ENCODE measurements at regions of chr13 and their contacts with region 1.

Region 1: GRCh38 chr13:109786457-109787134 is at the start of gene IRS2:
- DNase-seq: peak; percentile 91 to 95 (median 93)
- ATAC-seq: peak; percentile 78 to 93 (median 87)
- H3K4me3 ChIP-seq: peak within 1 kb of the TSS; percentile 64 to 95 (median 80)
- H3K27ac ChIP-seq: peak within 1 kb of the TSS; percentile 74 to 97 (median 91)
- H3K4me1 ChIP-seq: peaks cover 0 to 51% (median 23%) of the 10 kb centered on the region in 12 donors
- H3K27me3 ChIP-seq: peaks cover 0 to 7% (median 0%) of the 10 kb centered on the region in 9 donors
- CTCF ChIP-seq: no peak
- POLR2A ChIP-seq: peak; percentile 87 to 97
- total RNA-seq, gene IRS2: 6.5 to 54.9 (median 14.4) TPM

Region 2: DNA sequence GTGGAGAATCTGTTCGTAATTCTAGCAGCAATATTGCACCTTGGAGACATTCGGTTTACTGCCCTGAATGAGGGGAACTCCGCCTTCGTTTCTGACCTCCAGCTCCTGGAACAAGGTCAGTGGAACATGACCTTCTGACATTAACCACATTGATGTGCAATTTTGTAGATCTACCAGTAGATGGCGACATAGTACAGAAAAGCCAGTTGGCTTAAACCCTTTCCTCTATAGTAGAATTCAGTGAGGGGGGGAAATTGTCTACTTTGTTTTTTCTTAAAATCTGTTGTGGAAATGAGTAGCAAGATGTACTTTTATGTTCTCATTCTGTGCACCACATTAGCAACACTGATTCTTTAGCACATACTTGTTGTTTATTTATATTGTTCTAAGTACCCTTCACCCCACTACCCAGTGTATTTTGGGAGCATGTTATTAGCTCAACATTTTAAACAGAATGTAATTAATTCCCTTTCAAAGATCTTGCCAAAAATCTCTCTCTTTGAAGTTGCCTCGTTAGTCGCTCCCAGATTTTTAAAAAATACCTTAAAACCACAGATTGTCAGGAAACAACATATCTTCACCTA is 825.0 kb before region 1 on chr13:
- intact Hi-C with region 1: loop called in 8 of 10 experiments (anchors 5 to 10 kb)
- DNase-seq: no peak
- ATAC-seq: peak; percentile 41 to 85 (median 82)
- H3K4me3 ChIP-seq: no peak overlapping the region
- H3K27ac ChIP-seq: peak overlapping the region in 1 of 12 donors; percentile 5
- H3K4me1 ChIP-seq: peaks cover 0 to 6% (median 0%) of the 10 kb centered on the region in 12 donors
- H3K27me3 ChIP-seq: no peaks in the 10 kb centered on the region
- CTCF ChIP-seq: peak; percentile 81 to 92 (median 86)
- POLR2A ChIP-seq: no peak

Region 3: DNA sequence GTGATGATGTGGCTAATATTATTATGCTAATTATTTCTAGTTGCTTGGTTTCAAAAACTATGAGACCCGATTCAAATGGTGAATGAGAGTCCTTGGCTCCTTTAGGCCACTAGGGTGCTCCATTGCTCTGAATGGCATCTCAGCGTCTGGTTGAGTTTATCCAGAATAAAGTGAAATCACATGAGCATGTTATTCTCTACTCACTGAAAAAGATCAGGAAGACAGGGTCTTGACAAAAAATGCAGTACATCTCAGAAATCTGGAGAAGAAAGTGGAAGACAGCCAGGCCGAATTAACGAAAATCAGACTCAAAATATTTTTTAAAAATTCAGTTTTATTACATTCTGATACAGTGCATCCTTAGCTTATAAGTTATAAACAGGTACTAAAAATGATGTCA is 641.0 kb before region 1 on chr13:
- intact Hi-C with region 1: loop called in 8 of 10 experiments (anchors 2 to 10 kb)
- DNase-seq: peak in 3 of 5 donors; percentile 30 to 49 (median 39)
- ATAC-seq: peak; percentile 73 to 88 (median 82)
- H3K4me3 ChIP-seq: no peak overlapping the region
- H3K27ac ChIP-seq: peak overlapping the region in 1 of 12 donors; percentile 6
- H3K4me1 ChIP-seq: peaks cover 0 to 4% (median 0%) of the 10 kb centered on the region in 12 donors
- H3K27me3 ChIP-seq: peaks cover 0 to 18% (median 7%) of the 10 kb centered on the region in 9 donors
- CTCF ChIP-seq: peak; percentile 51 to 79 (median 70)
- POLR2A ChIP-seq: no peak

Region 4: DNA sequence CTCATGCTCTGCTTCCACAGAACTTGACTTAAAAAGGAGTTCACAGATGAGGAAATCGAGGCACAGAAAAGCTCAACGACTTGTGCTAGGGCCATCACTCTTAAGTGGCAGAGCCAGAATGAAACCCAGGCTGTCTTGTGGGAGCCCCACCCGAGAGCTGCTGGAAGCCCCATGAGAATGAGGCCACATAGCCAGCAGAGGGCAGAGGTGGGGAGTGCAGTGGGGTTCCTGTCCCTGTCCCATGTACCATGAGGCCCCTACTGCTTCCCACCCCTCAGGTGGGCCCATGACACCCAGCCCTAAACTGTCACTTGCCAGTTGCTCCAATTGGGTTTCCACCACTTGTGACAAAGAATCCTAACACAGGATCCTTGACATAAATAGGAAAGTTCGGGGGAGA is 176.1 kb before region 1 on chr13:
- intact Hi-C with region 1: loop called in 2 of 10 experiments (anchors 5 to 10 kb)
- DNase-seq: peak in 4 of 5 donors; percentile 31 to 70 (median 43)
- ATAC-seq: peak; percentile 61 to 79 (median 72)
- H3K4me3 ChIP-seq: no peak overlapping the region
- H3K27ac ChIP-seq: no peak overlapping the region
- H3K4me1 ChIP-seq: no peaks in the 10 kb centered on the region
- H3K27me3 ChIP-seq: peaks cover 0 to 4% (median 0%) of the 10 kb centered on the region in 9 donors
- CTCF ChIP-seq: peak in 11 of 12 donors; percentile 15 to 53 (median 35)
- POLR2A ChIP-seq: no peak

Region 5: DNA sequence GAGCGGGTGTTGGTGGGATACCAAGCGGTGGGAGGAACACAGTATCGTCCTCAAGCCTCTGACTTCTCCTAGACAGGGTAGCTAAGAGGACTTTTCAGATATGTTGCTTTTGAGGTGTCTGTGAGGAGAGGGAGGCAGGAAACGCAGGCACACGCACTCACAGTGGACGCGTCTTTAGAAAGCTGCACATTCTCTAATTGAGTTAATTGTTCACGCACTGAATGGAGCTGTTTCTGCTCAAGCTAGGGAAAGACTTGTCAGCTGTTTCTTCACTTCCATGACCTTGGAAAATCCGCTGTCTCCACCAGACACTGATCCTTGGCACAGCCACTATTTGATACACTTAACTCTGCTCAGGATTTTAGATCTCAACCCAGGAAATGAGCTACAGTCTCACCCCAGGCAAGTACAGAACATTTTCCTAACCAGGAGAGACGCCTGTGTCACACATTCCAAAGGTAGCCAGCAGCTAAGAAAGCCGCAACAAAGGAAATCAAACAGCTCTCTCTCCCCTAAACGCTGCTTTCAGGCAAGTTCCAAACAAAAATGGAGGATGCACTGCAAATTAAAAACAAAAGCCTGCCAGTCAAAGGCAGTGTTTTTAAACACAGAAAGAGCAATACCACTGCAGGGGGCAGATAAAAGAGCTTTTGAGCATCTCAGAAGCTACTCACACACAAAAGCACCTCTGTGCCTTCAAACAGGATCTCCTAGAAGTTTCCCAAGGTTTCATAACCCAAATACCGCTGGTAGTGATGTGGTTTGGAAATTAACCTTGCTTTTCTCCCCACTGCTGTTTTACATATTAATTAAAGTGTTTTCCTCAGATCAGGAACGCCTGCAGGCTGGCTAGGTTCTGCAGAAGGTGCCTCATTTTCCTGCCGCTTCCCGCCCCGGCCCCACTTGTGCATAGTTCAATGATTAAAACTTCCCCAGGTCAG is 57.5 kb before region 1 on chr13:
- intact Hi-C with region 1: no loop called
- DNase-seq: no peak
- ATAC-seq: peak in 1 of 4 donors; percentile 27
- H3K4me3 ChIP-seq: no peak overlapping the region
- H3K27ac ChIP-seq: no peak overlapping the region
- H3K4me1 ChIP-seq: peaks cover 0 to 7% (median 0%) of the 10 kb centered on the region in 12 donors
- H3K27me3 ChIP-seq: peaks cover 0 to 9% (median 0%) of the 10 kb centered on the region in 9 donors
- CTCF ChIP-seq: no peak
- POLR2A ChIP-seq: no peak

Region 6: GRCh38 chr13:109869312-109870237 is 83.0 kb after region 1 on chr13:
- intact Hi-C with region 1: loop called in 4 of 10 experiments (anchors 5 to 10 kb)
- DNase-seq: peak; percentile 73 to 91 (median 90)
- ATAC-seq: peak; percentile 79 to 93 (median 88)
- H3K4me3 ChIP-seq: peak overlapping the region in 11 of 12 donors; percentile 13 to 56 (median 42)
- H3K27ac ChIP-seq: peak overlapping the region; percentile 22 to 79 (median 68)
- H3K4me1 ChIP-seq: peaks cover 0 to 30% (median 13%) of the 10 kb centered on the region in 12 donors
- H3K27me3 ChIP-seq: no peaks in the 10 kb centered on the region
- CTCF ChIP-seq: peak in 6 of 12 donors; percentile 13 to 55 (median 34)
- POLR2A ChIP-seq: no peak

Region 7: GRCh38 chr13:109883181-109884180 is 96.9 kb after region 1 on chr13:
- intact Hi-C with region 1: loop called in 1 of 10 experiments (anchors 5 kb)
- DNase-seq: peak in 2 of 5 donors; percentile 44 to 53
- ATAC-seq: peak; percentile 89 to 96 (median 92)
- H3K4me3 ChIP-seq: no peak overlapping the region
- H3K27ac ChIP-seq: peak overlapping the region in 3 of 12 donors; percentile 30 to 57 (median 33)
- H3K4me1 ChIP-seq: peaks cover 0 to 19% (median 0%) of the 10 kb centered on the region in 12 donors
- H3K27me3 ChIP-seq: no peaks in the 10 kb centered on the region
- CTCF ChIP-seq: no peak
- POLR2A ChIP-seq: no peak

Region 8: GRCh38 chr13:109979224-109979623 is 192.6 kb after region 1 on chr13:
- intact Hi-C with region 1: no loop called
- DNase-seq: no peak
- ATAC-seq: no peak
- H3K4me3 ChIP-seq: no peak overlapping the region
- H3K27ac ChIP-seq: no peak overlapping the region
- H3K4me1 ChIP-seq: peaks cover 0 to 9% (median 0%) of the 10 kb centered on the region in 12 donors
- H3K27me3 ChIP-seq: no peaks in the 10 kb centered on the region
- CTCF ChIP-seq: no peak
- POLR2A ChIP-seq: no peak

Region 9: DNA sequence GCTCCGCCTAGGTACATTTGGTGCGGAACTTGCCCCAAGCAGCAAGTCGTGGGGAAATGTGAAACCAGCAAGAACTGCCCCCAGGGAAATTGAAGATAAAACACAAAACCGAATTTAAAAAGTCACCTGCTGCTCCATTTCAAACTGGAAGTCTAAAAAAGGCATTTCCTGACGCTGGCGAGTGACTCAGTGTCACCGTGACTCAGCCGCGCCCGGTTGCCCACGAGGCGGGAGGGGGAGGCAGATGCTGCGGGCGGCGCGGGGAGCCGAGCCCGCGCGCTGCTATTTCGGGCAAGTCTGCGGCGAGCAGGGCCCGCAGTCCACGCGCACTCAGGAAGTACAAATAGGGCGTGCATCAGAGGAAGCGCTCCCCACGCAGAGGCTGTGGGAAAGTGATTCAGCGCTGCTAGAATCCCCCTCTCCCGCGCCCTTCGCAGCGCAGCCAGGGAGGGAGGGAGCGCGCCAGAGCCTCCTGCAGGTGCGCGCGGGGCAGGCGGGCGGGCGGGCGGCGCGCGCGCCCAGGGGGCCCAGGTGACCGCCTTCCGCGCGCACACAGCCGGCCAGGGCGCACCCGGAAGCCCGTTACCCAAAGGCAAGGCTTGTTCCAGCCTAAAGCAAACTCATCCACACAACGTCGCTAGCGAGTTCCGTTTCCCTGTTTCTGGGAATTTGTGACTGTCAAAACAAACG is 351.6 kb after region 1 on chr13:
- intact Hi-C with region 1: loop called in 4 of 10 experiments (anchors 5 to 10 kb)
- DNase-seq: peak; percentile 58 to 83 (median 78)
- ATAC-seq: peak in 3 of 4 donors; percentile 51 to 66 (median 64)
- H3K4me3 ChIP-seq: peak overlapping the region; percentile 37 to 81 (median 60)
- H3K27ac ChIP-seq: peak overlapping the region; percentile 36 to 97 (median 83)
- H3K4me1 ChIP-seq: peaks cover 0 to 41% (median 20%) of the 10 kb centered on the region in 12 donors
- H3K27me3 ChIP-seq: no peaks in the 10 kb centered on the region
- CTCF ChIP-seq: peak in 2 of 12 donors; percentile 6 to 34
- POLR2A ChIP-seq: peak in 1 of 2 donors; percentile 24

Measured in heart left ventricle (tissue), 16 donors.